ENCODE measurements at regions of chr3 and their contacts with region 1.

Region 1: DNA sequence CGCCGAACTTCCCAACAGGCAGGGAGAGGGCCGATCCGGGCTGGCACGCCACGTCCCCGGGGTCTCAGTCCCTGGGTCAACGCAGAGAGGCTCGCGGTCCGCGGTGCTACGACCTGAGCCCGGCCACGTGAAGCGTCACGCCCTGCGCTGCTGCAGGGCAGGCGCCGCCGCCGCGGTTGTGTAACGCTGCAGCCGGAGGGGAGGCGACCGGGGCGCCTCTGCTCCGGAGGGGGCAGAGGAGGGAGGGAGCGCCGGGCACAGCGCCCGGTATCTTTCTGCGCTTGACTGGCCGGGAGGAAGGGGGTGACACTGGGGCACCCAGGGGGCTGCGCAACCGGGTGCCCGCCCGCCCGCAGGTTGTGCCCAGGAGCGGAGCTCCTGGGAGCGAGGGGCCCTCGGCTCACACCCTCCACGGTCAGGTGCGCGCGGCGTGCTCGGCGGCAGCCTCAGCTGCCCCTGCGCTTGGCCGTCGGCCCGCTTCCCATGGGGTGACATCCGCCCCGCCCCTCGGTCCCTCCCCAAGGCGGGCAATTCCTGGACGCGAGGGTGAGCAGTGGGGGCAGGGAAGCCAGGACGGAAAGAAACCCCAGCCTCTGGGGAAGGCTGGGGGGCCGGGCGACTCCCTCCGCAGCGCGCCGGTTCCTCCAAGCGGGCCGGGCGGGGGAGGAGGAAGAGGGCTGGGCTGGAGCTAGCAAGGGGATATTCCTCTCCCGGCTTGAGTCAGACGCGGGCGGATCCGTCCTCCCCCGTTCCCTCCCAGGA is 852 bp upstream of the BHLHE40 start:
- DNase-seq: peak; percentile 52 to 92 (median 70)
- ATAC-seq: peak; percentile 43
- H3K4me3 ChIP-seq: peak overlapping the region; percentile 71 to 97
- H3K4me3 Mint-ChIP-seq: peak overlapping the region; percentile 97
- H3K27ac ChIP-seq: peak overlapping the region; percentile 70 to 95
- H3K27ac Mint-ChIP-seq: peak overlapping the region; percentile 96
- H3K4me1 ChIP-seq: peaks cover 46% of the 10 kb centered on the region
- H3K4me1 Mint-ChIP-seq: peaks cover 47% of the 10 kb centered on the region
- H3K27me3 ChIP-seq: no peaks in the 10 kb centered on the region
- H3K27me3 Mint-ChIP-seq: no peaks in the 10 kb centered on the region
- CTCF ChIP-seq: no peak

Region 2: GRCh38 chr3:4834403-4834866 is 143.9 kb before region 1 on chr3:
- CTCF ChIA-PET with region 1: interaction called, 10 read pairs
- POLR2A ChIA-PET with region 1: interaction called, 7 read pairs
- intact Hi-C with region 1: loop called in 1 of 2 experiments (anchors 2 kb)
- DNase-seq: peak; percentile 47 to 89 (median 74)
- ATAC-seq: peak; percentile 46
- H3K4me3 ChIP-seq: peak overlapping the region in 1 of 2 experiments; percentile 7
- H3K4me3 Mint-ChIP-seq: peak overlapping the region; percentile 32
- H3K27ac ChIP-seq: peak overlapping the region in 1 of 2 experiments; percentile 9
- H3K27ac Mint-ChIP-seq: peak overlapping the region; percentile 82
- H3K4me1 ChIP-seq: peaks cover 61% of the 10 kb centered on the region
- H3K4me1 Mint-ChIP-seq: peaks cover 79% of the 10 kb centered on the region
- H3K27me3 ChIP-seq: no peaks in the 10 kb centered on the region
- H3K27me3 Mint-ChIP-seq: no peaks in the 10 kb centered on the region
- CTCF ChIP-seq: no peak

Region 3: DNA sequence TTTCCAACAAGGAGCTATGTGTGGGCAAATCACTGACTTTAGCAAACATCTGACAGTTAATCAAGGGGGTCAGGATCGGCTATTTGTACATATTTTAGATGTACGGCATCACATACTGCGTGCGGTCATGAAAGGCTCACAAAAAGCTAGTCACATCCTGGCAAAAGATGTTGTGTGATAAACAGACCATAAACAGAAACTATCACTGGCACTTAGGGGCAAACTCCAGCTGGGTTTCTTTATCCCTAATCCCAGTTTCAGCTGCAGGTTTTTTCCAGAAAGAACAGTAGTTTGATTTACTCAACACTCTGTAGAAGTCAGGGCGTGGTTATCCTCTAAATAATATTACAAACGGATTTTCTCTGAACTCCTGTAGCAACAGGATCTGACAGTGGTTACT is 111.5 kb before region 1 on chr3:
- CTCF ChIA-PET with region 1: interaction called, 10 read pairs
- POLR2A ChIA-PET with region 1: interaction called, 3 read pairs
- intact Hi-C with region 1: no loop called
- DNase-seq: peak in 2 of 9 experiments; percentile 47 to 61
- ATAC-seq: no peak
- H3K4me3 ChIP-seq: no peak overlapping the region
- H3K4me3 Mint-ChIP-seq: peak overlapping the region; percentile 84
- H3K27ac ChIP-seq: peak overlapping the region; percentile 67 to 83
- H3K27ac Mint-ChIP-seq: peak overlapping the region; percentile 94
- H3K4me1 ChIP-seq: peaks cover 25% of the 10 kb centered on the region
- H3K4me1 Mint-ChIP-seq: peaks cover 34% of the 10 kb centered on the region
- H3K27me3 ChIP-seq: no peaks in the 10 kb centered on the region
- H3K27me3 Mint-ChIP-seq: no peaks in the 10 kb centered on the region
- CTCF ChIP-seq: no peak

Region 4: DNA sequence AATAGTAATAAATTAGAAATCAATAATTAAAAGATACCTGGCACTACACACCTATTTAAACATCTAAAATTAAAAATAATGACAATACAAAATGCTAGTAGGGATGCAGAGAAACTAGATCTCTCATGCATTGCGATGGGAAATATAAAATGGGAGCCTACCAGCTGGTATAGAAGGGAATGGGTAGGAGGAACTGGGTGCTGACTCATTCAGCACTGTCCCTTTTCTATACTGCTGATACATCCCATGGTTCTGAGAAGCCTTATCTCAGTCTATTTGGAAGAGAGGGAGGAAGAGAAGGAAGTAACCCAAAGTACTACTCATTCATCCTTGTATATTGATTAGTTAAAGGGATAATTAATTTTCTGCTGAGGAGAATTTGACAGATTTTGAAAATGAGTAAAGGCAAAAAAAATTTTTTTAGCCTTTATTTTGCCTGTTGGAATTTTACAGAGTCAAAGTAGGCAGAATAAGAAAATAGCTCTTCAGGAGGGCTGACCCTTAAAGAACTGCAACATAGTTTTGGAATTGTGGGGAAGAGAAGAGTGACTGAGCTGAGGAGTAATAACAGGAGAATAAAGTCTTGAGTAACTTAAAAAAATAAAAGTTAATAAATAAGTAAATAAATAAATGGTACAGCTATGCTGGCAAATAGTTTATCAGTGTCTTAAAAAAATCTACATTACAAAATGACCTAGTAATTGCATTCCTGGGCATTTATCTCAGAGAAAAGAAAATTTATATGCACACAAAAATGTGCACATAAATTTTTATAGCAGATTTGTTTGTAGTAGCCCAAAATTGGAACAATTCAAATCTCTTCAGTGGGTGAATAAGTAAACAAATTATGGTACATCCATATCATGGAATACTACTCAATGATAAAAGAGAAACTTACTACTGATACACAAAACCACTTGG is 14.5 kb before region 1 on chr3:
- CTCF ChIA-PET with region 1: interaction called, 6 read pairs
- POLR2A ChIA-PET with region 1: interaction called, 6 read pairs
- intact Hi-C with region 1: loop called in 1 of 2 experiments (anchors 2 kb)
- DNase-seq: no peak
- ATAC-seq: no peak
- H3K4me3 ChIP-seq: no peak overlapping the region
- H3K4me3 Mint-ChIP-seq: no peak overlapping the region
- H3K27ac ChIP-seq: no peak overlapping the region
- H3K27ac Mint-ChIP-seq: no peak overlapping the region
- H3K4me1 ChIP-seq: peaks cover 11% of the 10 kb centered on the region
- H3K4me1 Mint-ChIP-seq: peaks cover 20% of the 10 kb centered on the region
- H3K27me3 ChIP-seq: no peaks in the 10 kb centered on the region
- H3K27me3 Mint-ChIP-seq: no peaks in the 10 kb centered on the region
- CTCF ChIP-seq: no peak

Region 5: GRCh38 chr3:5016218-5017161 is 38.1 kb after region 1 on chr3:
- CTCF ChIA-PET with region 1: interaction called, 13 read pairs
- POLR2A ChIA-PET with region 1: interaction called, 10 read pairs
- intact Hi-C with region 1: loop called in 1 of 2 experiments (anchors 10 kb)
- DNase-seq: peak in 8 of 9 experiments; percentile 32 to 77 (median 58)
- ATAC-seq: peak; percentile 53
- H3K4me3 ChIP-seq: no peak overlapping the region
- H3K4me3 Mint-ChIP-seq: no peak overlapping the region
- H3K27ac ChIP-seq: peak overlapping the region in 1 of 2 experiments; percentile 1
- H3K27ac Mint-ChIP-seq: peak overlapping the region; percentile 77
- H3K4me1 ChIP-seq: peaks cover 24% of the 10 kb centered on the region
- H3K4me1 Mint-ChIP-seq: peaks cover 42% of the 10 kb centered on the region
- H3K27me3 ChIP-seq: no peaks in the 10 kb centered on the region
- H3K27me3 Mint-ChIP-seq: peaks cover 2% of the 10 kb centered on the region
- CTCF ChIP-seq: no peak

Region 6: DNA sequence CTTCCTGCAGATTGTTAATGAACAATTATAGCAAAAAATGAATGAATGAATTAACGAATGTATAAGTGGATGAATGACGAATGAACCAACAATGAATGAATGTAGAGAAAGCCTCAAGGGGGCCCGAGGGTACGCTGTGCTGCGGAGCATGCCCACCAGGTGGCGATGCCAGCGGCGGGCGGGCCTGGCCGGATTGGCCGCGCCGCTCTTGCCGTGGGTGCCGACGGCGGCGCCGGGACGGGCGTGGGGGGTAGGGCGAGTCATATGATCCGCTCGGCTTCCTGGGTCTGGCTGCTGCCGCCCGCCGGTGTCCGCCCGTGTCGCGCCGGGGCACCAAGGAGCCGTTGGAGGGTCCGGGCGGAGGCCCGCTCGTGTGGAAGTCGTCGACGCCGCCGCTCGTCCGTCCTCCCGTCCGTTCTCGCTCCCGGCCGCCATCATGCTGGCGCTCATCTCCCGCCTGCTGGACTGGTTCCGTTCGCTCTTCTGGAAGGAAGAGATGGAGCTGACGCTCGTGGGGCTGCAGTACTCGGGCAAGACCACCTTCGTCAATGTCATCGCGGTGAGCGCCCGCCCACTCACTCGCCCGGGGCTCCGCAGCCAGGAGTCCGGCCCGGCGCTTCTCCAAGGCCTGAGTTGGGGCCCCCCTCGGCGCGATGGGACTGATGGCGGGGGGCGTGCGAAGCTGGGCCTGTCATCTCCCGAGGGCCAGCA is 143.8 kb after region 1 on chr3 and contains the start of gene ARL8B:
- CTCF ChIA-PET with region 1: no interaction called
- POLR2A ChIA-PET with region 1: no interaction called
- intact Hi-C with region 1: loop called in 1 of 2 experiments (anchors 2 kb)
- DNase-seq: peak; percentile 80 to 95 (median 91)
- ATAC-seq: peak; percentile 98
- H3K4me3 ChIP-seq: peak within 1 kb of the TSS; percentile 91 to 98
- H3K4me3 Mint-ChIP-seq: peak within 1 kb of the TSS; percentile 81
- H3K27ac ChIP-seq: peak within 1 kb of the TSS; percentile 87 to 92
- H3K27ac Mint-ChIP-seq: peak within 1 kb of the TSS; percentile 81
- H3K4me1 ChIP-seq: peaks cover 31% of the 10 kb centered on the region
- H3K4me1 Mint-ChIP-seq: peaks cover 38% of the 10 kb centered on the region
- H3K27me3 ChIP-seq: no peaks in the 10 kb centered on the region
- H3K27me3 Mint-ChIP-seq: no peaks in the 10 kb centered on the region
- CTCF ChIP-seq: peak; percentile 92
- total RNA-seq, gene ARL8B: 54.1 to 61.7 TPM

Region 7: DNA sequence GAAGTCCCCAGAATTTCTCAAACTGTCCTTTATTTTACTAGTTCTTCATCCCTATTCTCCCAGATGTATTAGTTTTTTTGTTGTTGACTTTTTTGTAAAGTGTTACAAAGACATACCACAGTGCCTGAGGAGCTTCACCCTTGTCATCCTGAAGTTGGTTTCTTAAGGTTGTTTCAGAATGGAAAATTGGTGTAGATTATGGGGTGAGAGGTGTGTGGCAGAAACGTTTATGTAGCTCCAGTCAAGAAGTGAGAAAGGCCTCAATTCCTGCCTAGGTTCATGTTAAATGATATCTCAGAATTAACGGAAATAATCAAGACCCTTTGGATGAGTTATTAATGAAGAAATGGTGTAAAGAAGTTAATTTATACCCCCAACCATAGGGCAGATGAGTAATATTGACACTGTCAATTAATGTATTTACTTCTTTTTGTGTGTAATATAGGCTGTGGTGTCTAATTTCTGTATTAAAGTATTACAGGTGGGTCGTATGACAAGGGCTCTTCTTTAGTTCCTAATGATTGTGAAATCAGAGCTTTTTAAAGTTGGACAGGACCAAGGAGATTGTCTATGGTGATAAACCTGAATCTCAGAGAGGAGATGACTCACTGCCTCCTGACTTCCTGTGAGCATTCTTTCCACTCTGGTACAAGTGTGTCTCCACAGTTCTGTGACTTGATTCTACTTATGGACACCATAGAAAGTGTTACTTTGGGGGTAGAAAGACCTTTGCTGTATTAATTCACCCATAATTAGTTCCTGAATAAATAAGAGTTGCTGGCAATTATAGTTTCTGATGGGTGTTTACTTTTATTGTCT is 216.2 kb after region 1 on chr3:
- CTCF ChIA-PET with region 1: no interaction called
- POLR2A ChIA-PET with region 1: no interaction called
- intact Hi-C with region 1: loop called (anchors 5 kb)
- DNase-seq: peak in 5 of 9 experiments; percentile 34 to 81 (median 51)
- ATAC-seq: peak; percentile 56
- H3K4me3 ChIP-seq: no peak overlapping the region
- H3K4me3 Mint-ChIP-seq: peak overlapping the region; percentile 1
- H3K27ac ChIP-seq: peak overlapping the region in 1 of 2 experiments; percentile 65
- H3K27ac Mint-ChIP-seq: peak overlapping the region; percentile 85
- H3K4me1 ChIP-seq: peaks cover 90% of the 10 kb centered on the region
- H3K4me1 Mint-ChIP-seq: peaks cover 86% of the 10 kb centered on the region
- H3K27me3 ChIP-seq: no peaks in the 10 kb centered on the region
- H3K27me3 Mint-ChIP-seq: no peaks in the 10 kb centered on the region
- CTCF ChIP-seq: no peak

Measured in CD8-positive, alpha-beta T cell (primary cell).